GM10248 (cell line): ENCODE measurements at regions of chr18 and their contacts with region 1.

Region 1: DNA sequence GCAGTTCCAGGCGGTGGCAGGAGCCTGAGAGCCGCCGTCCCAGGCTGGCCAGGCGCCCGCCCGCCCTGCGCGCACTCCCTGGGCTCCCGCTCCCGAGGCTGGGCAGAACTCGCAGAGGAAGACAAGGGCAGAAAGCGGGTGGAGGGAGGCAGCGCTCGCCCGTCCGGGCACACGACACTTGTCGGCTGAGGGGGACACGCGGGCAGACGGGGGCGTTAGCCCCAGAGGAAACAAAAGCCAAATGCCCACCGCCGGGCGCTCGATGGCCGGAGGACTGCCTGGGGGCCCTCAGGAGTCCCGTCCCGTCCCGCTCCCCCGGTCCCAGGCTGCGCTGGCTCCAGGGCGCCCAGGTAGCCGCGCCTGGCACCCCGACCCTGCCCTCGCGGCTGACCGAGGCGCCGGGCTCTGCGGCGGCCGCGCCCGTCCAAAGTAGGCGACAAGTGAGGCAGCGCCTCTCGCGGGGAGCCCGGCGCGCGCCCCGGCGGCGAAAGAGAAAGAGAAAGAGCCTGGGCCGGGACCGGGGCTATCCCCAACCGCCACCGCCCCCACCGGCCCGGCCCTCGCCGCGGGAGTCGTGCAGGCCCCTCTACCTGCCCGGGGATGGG is 491 bp downstream of the L3MBTL4 start:
- DNase-seq: peak; percentile 91
- CTCF ChIP-seq: no peak

Region 2: GRCh38 chr18:6109743-6110142 is 304.5 kb before region 1 on chr18:
- CTCF ChIA-PET with region 1: no interaction called
- POLR2A ChIA-PET with region 1: no interaction called
- DNase-seq: no peak
- CTCF ChIP-seq: no peak

Region 3: DNA sequence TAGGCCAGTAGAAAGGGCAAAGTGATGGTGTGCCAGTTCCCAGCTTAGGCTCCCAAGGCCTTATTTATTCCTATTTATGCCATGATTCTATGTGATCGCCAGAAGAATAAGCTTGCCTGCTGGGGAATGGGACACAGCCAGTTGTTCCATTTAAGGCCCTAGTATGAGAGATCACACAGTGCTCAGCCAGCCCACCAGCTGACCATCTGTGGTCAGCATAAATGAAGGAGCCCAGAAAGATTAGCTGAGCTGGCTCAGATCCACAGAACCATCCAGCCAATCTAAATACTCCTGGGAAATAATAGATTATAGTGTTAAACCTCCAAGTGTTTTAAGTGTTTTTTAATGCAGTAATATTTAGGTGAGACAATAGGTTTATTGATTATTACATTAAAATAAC is 13.1 kb after region 1 on chr18:
- CTCF ChIA-PET with region 1: interaction called, 18 read pairs
- POLR2A ChIA-PET with region 1: no interaction called
- DNase-seq: no peak
- CTCF ChIP-seq: no peak

Region 4: DNA sequence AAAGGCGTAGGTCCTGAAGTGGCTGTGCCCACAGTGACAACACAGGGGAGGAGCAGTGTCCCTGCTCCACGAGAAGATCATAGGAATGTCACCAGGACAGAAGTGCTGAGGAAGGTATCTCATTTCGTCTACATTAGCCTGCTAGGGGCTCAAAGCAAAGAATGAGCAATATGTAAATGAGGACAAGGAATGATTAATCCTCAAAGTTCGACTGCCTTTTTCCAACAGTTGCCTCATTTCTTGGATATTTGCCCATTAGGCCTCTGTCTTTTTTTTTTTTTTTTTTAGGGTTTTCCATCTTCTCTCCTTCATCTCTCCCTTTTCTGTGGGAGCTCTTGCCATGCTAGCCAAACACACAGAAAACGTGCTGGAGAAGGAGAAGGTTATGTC is 210.0 kb after region 1 on chr18:
- CTCF ChIA-PET with region 1: no interaction called
- POLR2A ChIA-PET with region 1: no interaction called
- DNase-seq: no peak
- CTCF ChIP-seq: no peak